ENCODE measurements at regions of chr13 and their contacts with region 1.

Region 1: GRCh38 chr13:52450012-52450792 is at the start of gene VPS36:
- DNase-seq: peak; percentile 88 to 99 (median 94)
- ATAC-seq: peak; percentile 58
- H3K4me3 ChIP-seq: peak within 1 kb of the TSS; percentile 74
- H3K4me3 Mint-ChIP-seq: peak within 1 kb of the TSS; percentile 94
- H3K27ac ChIP-seq: peak within 1 kb of the TSS; percentile 4 to 43
- H3K27ac Mint-ChIP-seq: peak within 1 kb of the TSS; percentile 79
- H3K4me1 ChIP-seq: peaks cover 25% of the 10 kb centered on the region
- H3K4me1 Mint-ChIP-seq: peaks cover 55% of the 10 kb centered on the region
- H3K27me3 ChIP-seq: no peaks in the 10 kb centered on the region
- H3K27me3 Mint-ChIP-seq: no peaks in the 10 kb centered on the region
- CTCF ChIP-seq: peak; percentile 98
- total RNA-seq, gene VPS36: 29.9 to 31.0 TPM

Region 2: GRCh38 chr13:51583875-51584730 is 866.1 kb before region 1 on chr13 and contains the start of gene WDFY2:
- CTCF ChIA-PET with region 1: no interaction called
- POLR2A ChIA-PET with region 1: no interaction called
- intact Hi-C with region 1: loop called in 1 of 2 experiments (anchors 5 kb)
- DNase-seq: peak; percentile 98 to 100 (median 99)
- ATAC-seq: peak; percentile 82
- H3K4me3 ChIP-seq: peak within 1 kb of the TSS; percentile 67
- H3K4me3 Mint-ChIP-seq: peak within 1 kb of the TSS; percentile 97
- H3K27ac ChIP-seq: peak within 1 kb of the TSS; percentile 88 to 90
- H3K27ac Mint-ChIP-seq: peak within 1 kb of the TSS; percentile 96
- H3K4me1 ChIP-seq: peaks cover 15% of the 10 kb centered on the region
- H3K4me1 Mint-ChIP-seq: peaks cover 41% of the 10 kb centered on the region
- H3K27me3 ChIP-seq: no peaks in the 10 kb centered on the region
- H3K27me3 Mint-ChIP-seq: no peaks in the 10 kb centered on the region
- CTCF ChIP-seq: no peak
- total RNA-seq, gene WDFY2: 21.4 to 21.9 TPM

Region 3: GRCh38 chr13:51814825-51815650 is 635.2 kb before region 1 on chr13:
- CTCF ChIA-PET with region 1: no interaction called
- POLR2A ChIA-PET with region 1: no interaction called
- intact Hi-C with region 1: loop called (anchors 5 to 10 kb)
- DNase-seq: peak; percentile 56 to 88 (median 68)
- ATAC-seq: peak; percentile 80
- H3K4me3 ChIP-seq: peak overlapping the region; percentile 13
- H3K4me3 Mint-ChIP-seq: peak overlapping the region; percentile 77
- H3K27ac ChIP-seq: peak overlapping the region in 1 of 2 donors; percentile 23
- H3K27ac Mint-ChIP-seq: peak overlapping the region; percentile 89
- H3K4me1 ChIP-seq: peaks cover 79% of the 10 kb centered on the region
- H3K4me1 Mint-ChIP-seq: peaks cover 84% of the 10 kb centered on the region
- H3K27me3 ChIP-seq: no peaks in the 10 kb centered on the region
- H3K27me3 Mint-ChIP-seq: no peaks in the 10 kb centered on the region
- CTCF ChIP-seq: peak; percentile 89

Region 4: GRCh38 chr13:52001120-52001731 is 449.0 kb before region 1 on chr13:
- CTCF ChIA-PET with region 1: no interaction called
- POLR2A ChIA-PET with region 1: no interaction called
- intact Hi-C with region 1: loop called in 1 of 2 experiments (anchors 5 kb)
- DNase-seq: peak in 5 of 14 experiments; percentile 5 to 61 (median 51)
- ATAC-seq: peak; percentile 81
- H3K4me3 ChIP-seq: no peak overlapping the region
- H3K4me3 Mint-ChIP-seq: no peak overlapping the region
- H3K27ac ChIP-seq: no peak overlapping the region
- H3K27ac Mint-ChIP-seq: no peak overlapping the region
- H3K4me1 ChIP-seq: no peaks in the 10 kb centered on the region
- H3K4me1 Mint-ChIP-seq: peaks cover 4% of the 10 kb centered on the region
- H3K27me3 ChIP-seq: peaks cover 0 to 4% of the 10 kb centered on the region in 2 experiments
- H3K27me3 Mint-ChIP-seq: peaks cover 8% of the 10 kb centered on the region
- CTCF ChIP-seq: peak; percentile 85

Region 5: GRCh38 chr13:52159321-52160086 is 290.7 kb before region 1 on chr13 and contains the start of gene NEK3:
- CTCF ChIA-PET with region 1: interaction called, 3 read pairs
- POLR2A ChIA-PET with region 1: no interaction called
- intact Hi-C with region 1: loop called in 1 of 2 experiments (anchors 10 kb)
- DNase-seq: peak; percentile 20 to 59 (median 43)
- ATAC-seq: peak; percentile 87
- H3K4me3 ChIP-seq: peak within 1 kb of the TSS; percentile 62
- H3K4me3 Mint-ChIP-seq: peak within 1 kb of the TSS; percentile 92
- H3K27ac ChIP-seq: no peak within 1 kb of the TSS
- H3K27ac Mint-ChIP-seq: peak within 1 kb of the TSS; percentile 83
- H3K4me1 ChIP-seq: peaks cover 16% of the 10 kb centered on the region
- H3K4me1 Mint-ChIP-seq: peaks cover 43% of the 10 kb centered on the region
- H3K27me3 ChIP-seq: no peaks in the 10 kb centered on the region
- H3K27me3 Mint-ChIP-seq: no peaks in the 10 kb centered on the region
- CTCF ChIP-seq: no peak
- total RNA-seq, gene NEK3: 7.0 TPM

Region 6: GRCh38 chr13:52344108-52344507 is 106.1 kb before region 1 on chr13:
- CTCF ChIA-PET with region 1: interaction called, 18 read pairs
- POLR2A ChIA-PET with region 1: no interaction called
- intact Hi-C with region 1: no loop called
- DNase-seq: no peak
- ATAC-seq: no peak
- H3K4me3 ChIP-seq: no peak overlapping the region
- H3K4me3 Mint-ChIP-seq: no peak overlapping the region
- H3K27ac ChIP-seq: no peak overlapping the region
- H3K27ac Mint-ChIP-seq: no peak overlapping the region
- H3K4me1 ChIP-seq: no peaks in the 10 kb centered on the region
- H3K4me1 Mint-ChIP-seq: no peaks in the 10 kb centered on the region
- H3K27me3 ChIP-seq: no peaks in the 10 kb centered on the region
- H3K27me3 Mint-ChIP-seq: peaks cover 2% of the 10 kb centered on the region
- CTCF ChIP-seq: no peak

Region 7: DNA sequence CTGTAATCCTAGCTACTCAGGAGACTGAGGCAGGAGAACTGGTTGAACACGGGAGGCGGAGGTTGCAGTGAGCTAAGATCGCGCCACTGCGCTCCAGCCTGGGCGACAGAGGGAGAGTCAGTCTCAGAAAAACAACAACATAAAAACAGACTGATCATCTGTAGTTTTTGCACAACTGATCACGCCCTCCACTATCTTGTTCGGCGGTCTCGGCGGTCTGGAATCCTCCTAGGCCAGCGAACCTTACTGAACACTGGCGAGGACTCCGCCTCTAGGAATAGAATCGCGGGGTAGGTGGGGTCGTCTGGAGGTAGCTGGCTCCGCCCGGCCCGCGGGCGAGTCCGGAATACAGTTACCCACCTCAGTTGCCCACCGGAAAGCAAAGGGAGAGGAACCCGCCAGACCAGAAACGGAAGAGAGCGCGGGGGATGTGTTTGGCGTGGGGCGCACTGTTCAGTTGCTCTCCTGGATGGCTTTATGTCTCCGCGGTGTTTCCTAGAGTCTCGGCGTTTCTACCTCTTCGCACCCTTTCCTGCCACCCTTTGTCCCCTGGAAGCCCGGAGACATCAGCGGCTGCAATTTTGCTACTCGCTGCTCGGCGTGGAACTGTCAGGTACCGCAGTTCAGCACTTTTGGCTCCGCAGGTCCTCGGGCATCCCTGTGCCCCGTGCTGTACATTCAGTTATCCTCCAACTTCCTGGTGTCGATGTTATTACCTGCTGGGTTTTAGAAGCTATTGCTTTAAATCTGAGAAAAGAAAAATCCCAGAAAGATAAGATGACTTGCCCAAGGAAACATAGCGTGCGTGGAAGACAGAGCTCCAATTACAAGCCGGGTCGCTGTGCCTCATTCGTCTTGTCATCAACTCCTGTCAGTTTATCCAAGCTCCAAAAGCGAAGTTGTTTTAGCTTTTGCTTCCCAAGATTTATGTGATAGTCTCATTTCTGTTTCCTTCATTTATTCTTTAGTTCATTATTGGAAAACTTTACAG is 167.2 kb after region 1 on chr13:
- CTCF ChIA-PET with region 1: interaction called, 7 read pairs
- POLR2A ChIA-PET with region 1: interaction called, 5 read pairs
- intact Hi-C with region 1: loop called in 1 of 2 experiments (anchors 2 kb)
- DNase-seq: peak; percentile 73 to 90 (median 81)
- ATAC-seq: peak; percentile 93
- H3K4me3 ChIP-seq: peak overlapping the region; percentile 81
- H3K4me3 Mint-ChIP-seq: peak overlapping the region; percentile 96
- H3K27ac ChIP-seq: peak overlapping the region; percentile 55 to 76
- H3K27ac Mint-ChIP-seq: peak overlapping the region; percentile 86
- H3K4me1 ChIP-seq: peaks cover 28% of the 10 kb centered on the region
- H3K4me1 Mint-ChIP-seq: peaks cover 42% of the 10 kb centered on the region
- H3K27me3 ChIP-seq: no peaks in the 10 kb centered on the region
- H3K27me3 Mint-ChIP-seq: no peaks in the 10 kb centered on the region
- CTCF ChIP-seq: no peak